ENCODE measurements at regions of chr14 and their contacts with region 1.

Region 1: DNA sequence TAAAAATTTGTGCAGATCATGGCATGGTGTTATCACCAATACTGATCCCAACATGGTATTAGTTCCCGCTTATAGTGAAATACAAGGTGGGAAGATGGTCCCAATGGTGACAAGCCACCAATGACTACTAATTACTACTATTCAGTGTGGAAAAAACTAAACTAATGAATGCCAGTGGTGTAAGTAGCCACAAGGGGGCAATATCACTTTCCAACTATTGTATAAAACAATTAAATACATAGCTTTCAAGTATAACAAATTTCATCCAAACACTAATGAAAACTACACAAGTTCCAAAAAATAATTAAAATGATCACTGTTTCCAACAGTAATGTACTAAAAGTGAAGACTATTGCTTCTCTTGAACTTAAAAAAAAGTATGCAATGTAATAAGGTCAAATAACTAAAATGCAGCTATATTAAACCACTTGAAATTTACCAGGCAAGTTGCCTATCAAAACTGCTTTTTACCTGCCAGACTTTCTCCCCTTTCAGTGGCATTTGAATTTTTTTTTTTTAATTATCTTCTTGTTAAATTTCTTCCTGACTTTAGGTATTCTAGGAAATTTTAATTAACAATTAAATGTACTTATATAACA is 58.0 kb downstream of the PAPLN start:
- DNase-seq: peak; percentile 78
- ATAC-seq: peak; percentile 36
- H3K4me3 ChIP-seq: no peak overlapping the region
- H3K27ac ChIP-seq: no peak overlapping the region
- H3K4me1 ChIP-seq: peaks cover 7% of the 10 kb centered on the region
- H3K27me3 ChIP-seq: no peaks in the 10 kb centered on the region
- CTCF ChIP-seq: peak; percentile 98

Region 2: GRCh38 chr14:73116079-73116665 is 179.1 kb before region 1 on chr14:
- CTCF ChIA-PET with region 1: no interaction called
- POLR2A ChIA-PET with region 1: no interaction called
- intact Hi-C with region 1: no loop called
- DNase-seq: no peak
- ATAC-seq: no peak; the same call in 1 of the 2 replicates
- H3K4me3 ChIP-seq: no peak overlapping the region
- H3K27ac ChIP-seq: no peak overlapping the region
- H3K4me1 ChIP-seq: no peaks in the 10 kb centered on the region
- H3K27me3 ChIP-seq: no peaks in the 10 kb centered on the region
- CTCF ChIP-seq: no peak

Region 3: DNA sequence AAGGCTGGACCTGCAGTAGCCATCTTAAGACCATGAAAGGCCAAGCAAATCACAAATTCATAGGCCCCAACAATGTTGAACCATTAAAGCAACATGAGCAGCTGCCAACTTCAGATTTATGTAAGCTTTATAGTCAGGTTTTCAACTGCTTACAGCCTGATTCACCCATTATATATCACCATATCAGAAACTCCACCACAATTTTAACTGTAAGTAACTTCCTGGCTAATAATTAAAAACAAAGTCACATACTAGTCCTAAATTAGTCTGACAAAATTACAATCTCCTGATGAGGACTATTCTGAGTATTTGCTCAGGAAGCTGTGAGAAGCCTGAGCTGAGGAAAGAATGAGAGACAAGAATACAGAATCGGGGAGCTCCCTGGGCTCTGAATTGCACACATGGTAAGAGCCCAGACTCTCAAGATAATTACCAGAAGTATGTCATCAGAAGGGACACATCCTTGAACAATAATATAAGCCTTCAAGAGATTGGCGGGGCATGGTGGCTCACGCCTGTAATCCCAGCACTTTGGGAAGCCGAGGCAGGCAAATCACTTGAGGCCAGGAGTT is 108.0 kb after region 1 on chr14:
- CTCF ChIA-PET with region 1: no interaction called
- POLR2A ChIA-PET with region 1: no interaction called
- intact Hi-C with region 1: loop called (anchors 5 kb)
- DNase-seq: no peak
- ATAC-seq: peak; percentile 28
- H3K4me3 ChIP-seq: no peak overlapping the region
- H3K27ac ChIP-seq: no peak overlapping the region
- H3K4me1 ChIP-seq: peaks cover 7% of the 10 kb centered on the region
- H3K27me3 ChIP-seq: no peaks in the 10 kb centered on the region
- CTCF ChIP-seq: no peak

Region 4: GRCh38 chr14:73472185-73473114 is 177.2 kb after region 1 on chr14:
- CTCF ChIA-PET with region 1: interaction called, 89 read pairs
- POLR2A ChIA-PET with region 1: no interaction called
- intact Hi-C with region 1: loop called (anchors 1 kb)
- DNase-seq: peak; percentile 87
- ATAC-seq: peak; percentile 88
- H3K4me3 ChIP-seq: no peak overlapping the region
- H3K27ac ChIP-seq: no peak overlapping the region
- H3K4me1 ChIP-seq: no peaks in the 10 kb centered on the region
- H3K27me3 ChIP-seq: no peaks in the 10 kb centered on the region
- CTCF ChIP-seq: peak; percentile 89